CD4-positive, alpha-beta memory T cell (primary cell): ENCODE measurements at regions of chr11 and their contacts with region 1.

Region 1: GRCh38 chr11:118689851-118690552 is 10.6 kb upstream of the TREH start:
- DNase-seq: peak; percentile 76 to 86 (median 83)
- H3K4me3 ChIP-seq: peak overlapping the region; percentile 44 to 75
- H3K4me3 Mint-ChIP-seq: peak overlapping the region; percentile 65 to 83 (median 76)
- H3K27ac ChIP-seq: peak overlapping the region; percentile 59
- H3K27ac Mint-ChIP-seq: peak overlapping the region in 6 of 7 donors; percentile 50 to 89 (median 78)
- H3K4me1 ChIP-seq: peaks cover 51% of the 10 kb centered on the region
- H3K4me1 Mint-ChIP-seq: peaks cover 37 to 67% (median 50%) of the 10 kb centered on the region in 4 donors
- H3K27me3 ChIP-seq: no peaks in the 10 kb centered on the region
- H3K27me3 Mint-ChIP-seq: peaks cover 0 to 3% of the 10 kb centered on the region in 2 donors

Region 2: GRCh38 chr11:118476676-118477075 is 213.3 kb before region 1 on chr11:
- CTCF ChIA-PET with region 1: no interaction called
- POLR2A ChIA-PET with region 1: no interaction called
- intact Hi-C with region 1: no loop called
- DNase-seq: no peak
- H3K4me3 ChIP-seq: no peak overlapping the region
- H3K4me3 Mint-ChIP-seq: no peak overlapping the region
- H3K27ac ChIP-seq: no peak overlapping the region
- H3K27ac Mint-ChIP-seq: peak overlapping the region in 5 of 7 donors; percentile 0 to 79 (median 66)
- H3K4me1 ChIP-seq: no peaks in the 10 kb centered on the region
- H3K4me1 Mint-ChIP-seq: peaks cover 10 to 19% (median 14%) of the 10 kb centered on the region in 4 donors
- H3K27me3 ChIP-seq: no peaks in the 10 kb centered on the region
- H3K27me3 Mint-ChIP-seq: no peaks in the 10 kb centered on the region

Region 3: GRCh38 chr11:118705111-118705741 is 15.2 kb after region 1 on chr11:
- CTCF ChIA-PET with region 1: interaction called, 28 read pairs
- POLR2A ChIA-PET with region 1: interaction called, 72 read pairs
- intact Hi-C with region 1: no loop called
- DNase-seq: peak; percentile 63 to 72 (median 70)
- H3K4me3 ChIP-seq: peak overlapping the region in 1 of 2 donors; percentile 29
- H3K4me3 Mint-ChIP-seq: peak overlapping the region; percentile 48 to 90 (median 74)
- H3K27ac ChIP-seq: peak overlapping the region; percentile 3
- H3K27ac Mint-ChIP-seq: peak overlapping the region; percentile 61 to 95 (median 89)
- H3K4me1 ChIP-seq: peaks cover 50% of the 10 kb centered on the region
- H3K4me1 Mint-ChIP-seq: peaks cover 27 to 48% (median 37%) of the 10 kb centered on the region in 4 donors
- H3K27me3 ChIP-seq: no peaks in the 10 kb centered on the region
- H3K27me3 Mint-ChIP-seq: no peaks in the 10 kb centered on the region

Region 4: GRCh38 chr11:118752654-118753053 is 62.7 kb after region 1 on chr11:
- CTCF ChIA-PET with region 1: interaction called, 21 read pairs
- POLR2A ChIA-PET with region 1: interaction called, 6 read pairs
- intact Hi-C with region 1: loop called (anchors 2 kb)
- DNase-seq: no peak
- H3K4me3 ChIP-seq: no peak overlapping the region
- H3K4me3 Mint-ChIP-seq: no peak overlapping the region
- H3K27ac ChIP-seq: no peak overlapping the region
- H3K27ac Mint-ChIP-seq: peak overlapping the region in 1 of 7 donors; percentile 85
- H3K4me1 ChIP-seq: peaks cover 6% of the 10 kb centered on the region
- H3K4me1 Mint-ChIP-seq: peaks cover 5 to 8% (median 7%) of the 10 kb centered on the region in 4 donors
- H3K27me3 ChIP-seq: no peaks in the 10 kb centered on the region
- H3K27me3 Mint-ChIP-seq: no peaks in the 10 kb centered on the region

Region 5: DNA sequence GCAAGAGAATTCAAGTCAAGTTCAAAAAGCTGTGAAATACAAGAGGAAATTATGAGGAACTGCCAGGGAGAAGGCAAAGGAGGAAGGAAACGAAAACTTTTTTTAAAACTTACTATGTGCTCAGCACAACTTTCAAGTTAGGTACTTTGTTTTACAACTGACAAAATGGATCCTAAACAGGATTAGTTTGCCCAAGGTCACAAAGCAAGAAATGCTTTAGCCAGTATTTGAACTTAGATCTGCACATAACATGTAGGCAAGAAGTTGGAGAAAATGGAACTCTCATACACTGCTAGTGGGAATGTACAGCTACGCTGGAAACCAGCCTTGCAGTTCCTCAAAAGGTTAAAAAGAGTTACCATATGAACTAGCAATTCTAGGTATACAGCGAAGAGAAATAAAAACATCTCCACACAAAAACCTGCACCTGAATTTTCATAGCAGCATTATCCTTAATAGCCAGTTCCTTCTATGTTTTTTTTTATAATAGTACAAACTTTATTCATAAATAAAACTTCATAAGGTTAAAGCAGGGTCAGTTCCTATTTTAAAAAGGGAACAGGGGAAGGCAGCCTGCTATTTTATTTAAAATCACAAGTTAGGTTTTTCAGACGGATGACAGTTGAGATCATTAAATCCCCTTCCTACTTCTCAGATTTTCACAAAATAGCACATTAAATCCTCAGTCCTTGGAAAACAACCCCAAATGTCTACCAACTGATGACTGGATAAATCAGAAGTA is 81.7 kb after region 1 on chr11:
- CTCF ChIA-PET with region 1: interaction called, 15 read pairs
- POLR2A ChIA-PET with region 1: interaction called, 4 read pairs
- intact Hi-C with region 1: loop called (anchors 5 kb)
- DNase-seq: no peak
- H3K4me3 ChIP-seq: no peak overlapping the region
- H3K4me3 Mint-ChIP-seq: peak overlapping the region in 7 of 8 donors; percentile 32 to 75 (median 64)
- H3K27ac ChIP-seq: no peak overlapping the region
- H3K27ac Mint-ChIP-seq: peak overlapping the region in 6 of 7 donors; percentile 36 to 80 (median 78)
- H3K4me1 ChIP-seq: peaks cover 94% of the 10 kb centered on the region
- H3K4me1 Mint-ChIP-seq: peaks cover 57 to 97% (median 77%) of the 10 kb centered on the region in 4 donors
- H3K27me3 ChIP-seq: no peaks in the 10 kb centered on the region
- H3K27me3 Mint-ChIP-seq: no peaks in the 10 kb centered on the region

Region 6: DNA sequence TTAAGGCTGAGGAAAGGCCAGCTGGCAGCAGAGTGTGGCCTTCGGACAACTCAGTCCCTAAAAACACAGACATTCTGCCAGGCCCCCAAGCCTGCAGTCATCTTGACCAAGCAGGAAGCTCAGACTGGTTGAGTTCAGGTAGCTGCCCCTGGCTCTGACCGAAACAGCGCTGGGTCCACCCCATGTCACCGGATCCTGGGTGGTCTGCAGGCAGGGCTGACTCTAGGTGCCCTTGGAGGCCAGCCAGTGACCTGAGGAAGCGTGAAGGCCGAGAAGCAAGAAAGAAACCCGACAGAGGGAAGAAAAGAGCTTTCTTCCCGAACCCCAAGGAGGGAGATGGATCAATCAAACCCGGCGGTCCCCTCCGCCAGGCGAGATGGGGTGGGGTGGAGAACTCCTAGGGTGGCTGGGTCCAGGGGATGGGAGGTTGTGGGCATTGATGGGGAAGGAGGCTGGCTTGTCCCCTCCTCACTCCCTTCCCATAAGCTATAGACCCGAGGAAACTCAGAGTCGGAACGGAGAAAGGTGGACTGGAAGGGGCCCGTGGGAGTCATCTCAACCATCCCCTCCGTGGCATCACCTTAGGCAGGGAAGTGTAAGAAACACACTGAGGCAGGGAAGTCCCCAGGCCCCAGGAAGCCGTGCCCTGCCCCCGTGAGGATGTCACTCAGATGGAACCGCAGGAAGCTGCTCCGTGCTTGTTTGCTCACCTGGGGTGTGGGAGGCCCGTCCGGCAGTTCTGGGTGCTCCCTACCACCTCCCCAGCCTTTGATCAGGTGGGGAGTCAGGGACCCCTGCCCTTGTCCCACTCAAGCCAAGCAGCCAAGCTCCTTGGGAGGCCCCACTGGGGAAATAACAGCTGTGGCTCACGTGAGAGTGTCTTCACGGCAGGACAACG is 205.4 kb after region 1 on chr11:
- CTCF ChIA-PET with region 1: interaction called, 15 read pairs
- POLR2A ChIA-PET with region 1: interaction called, 10 read pairs
- intact Hi-C with region 1: no loop called
- DNase-seq: peak; percentile 80 to 91 (median 82)
- H3K4me3 ChIP-seq: peak overlapping the region; percentile 17 to 37
- H3K4me3 Mint-ChIP-seq: peak overlapping the region; percentile 68 to 87 (median 76)
- H3K27ac ChIP-seq: peak overlapping the region; percentile 84
- H3K27ac Mint-ChIP-seq: peak overlapping the region; percentile 93 to 98 (median 97)
- H3K4me1 ChIP-seq: peaks cover 83% of the 10 kb centered on the region
- H3K4me1 Mint-ChIP-seq: peaks cover 58 to 82% (median 70%) of the 10 kb centered on the region in 4 donors
- H3K27me3 ChIP-seq: no peaks in the 10 kb centered on the region
- H3K27me3 Mint-ChIP-seq: no peaks in the 10 kb centered on the region

Region 7: DNA sequence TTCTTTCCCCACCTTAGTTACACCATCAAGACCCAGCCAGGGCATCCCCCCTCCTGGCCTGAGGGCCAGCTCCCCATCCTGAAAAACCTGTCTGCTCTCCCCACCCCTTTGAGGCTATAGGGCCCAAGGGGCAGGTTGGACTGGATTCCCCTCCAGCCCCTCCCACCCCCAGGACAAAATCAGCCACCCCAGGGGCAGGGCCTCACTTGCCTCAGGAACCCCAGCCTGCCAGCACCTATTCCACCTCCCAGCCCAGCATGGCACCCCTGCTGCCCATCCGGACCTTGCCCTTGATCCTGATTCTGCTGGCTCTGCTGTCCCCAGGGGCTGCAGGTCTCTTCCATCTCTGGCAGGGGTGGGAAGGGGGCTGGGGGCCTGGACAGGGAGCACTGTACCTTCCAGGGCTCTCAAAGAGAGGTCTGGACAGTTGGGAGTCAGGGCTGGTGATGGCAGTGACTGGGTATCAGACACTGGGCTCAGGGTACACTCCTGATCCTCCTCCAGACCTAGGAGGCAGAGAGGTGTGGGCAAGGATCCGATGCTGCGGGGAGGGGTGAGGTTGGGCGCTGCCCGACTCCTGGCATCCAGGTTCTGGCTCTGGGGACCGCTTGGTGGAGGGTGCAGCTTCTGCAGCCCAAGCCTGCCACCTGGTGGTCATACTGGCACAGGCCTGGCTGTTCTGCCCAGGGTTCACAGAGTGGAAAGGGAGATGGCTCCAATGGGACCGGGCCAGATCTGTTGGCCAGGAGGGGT is 266.3 kb after region 1 on chr11 and contains the start of gene UPK2:
- CTCF ChIA-PET with region 1: interaction called, 37 read pairs
- POLR2A ChIA-PET with region 1: no interaction called
- intact Hi-C with region 1: loop called (anchors 1 kb)
- DNase-seq: peak; percentile 83 to 85 (median 83)
- H3K4me3 ChIP-seq: no peak within 1 kb of the TSS
- H3K4me3 Mint-ChIP-seq: no peak within 1 kb of the TSS
- H3K27ac ChIP-seq: no peak within 1 kb of the TSS
- H3K27ac Mint-ChIP-seq: peak within 1 kb of the TSS in 4 of 7 donors; percentile 42 to 55 (median 51)
- H3K4me1 ChIP-seq: peaks cover 5% of the 10 kb centered on the region
- H3K4me1 Mint-ChIP-seq: peaks cover 4 to 5% (median 4%) of the 10 kb centered on the region in 4 donors
- H3K27me3 ChIP-seq: no peaks in the 10 kb centered on the region
- H3K27me3 Mint-ChIP-seq: peaks cover under 1 to 4% of the 10 kb centered on the region in 2 donors
- total RNA-seq, gene UPK2: not detected